B cell (primary cell): ENCODE measurements at regions of chr1 and their contacts with region 1.

Region 1: GRCh38 chr1:84944767-84945486 is 51.9 kb upstream of the LPAR3 start:
- DNase-seq: peak; percentile 95
- ATAC-seq: peak; percentile 93
- H3K4me3 ChIP-seq: peak overlapping the region; percentile 49 to 76 (median 60)
- H3K4me3 Mint-ChIP-seq: peak overlapping the region; percentile 80
- H3K27ac ChIP-seq: peak overlapping the region; percentile 78 to 83
- H3K27ac Mint-ChIP-seq: peak overlapping the region; percentile 87
- H3K4me1 ChIP-seq: peaks cover 0 to 13% of the 10 kb centered on the region in 2 donors
- H3K4me1 Mint-ChIP-seq: peaks cover 10% of the 10 kb centered on the region
- H3K27me3 ChIP-seq: no peaks in the 10 kb centered on the region
- H3K27me3 Mint-ChIP-seq: no peaks in the 10 kb centered on the region
- CTCF ChIP-seq: peak; percentile 99

Region 2: GRCh38 chr1:84690397-84691121 is 254.4 kb before region 1 on chr1 and contains the start of gene SSX2IP:
- CTCF ChIA-PET with region 1: interaction called, 4 read pairs
- POLR2A ChIA-PET with region 1: no interaction called
- intact Hi-C with region 1: loop called (anchors 2 kb)
- DNase-seq: peak; percentile 97
- ATAC-seq: peak; percentile 86
- H3K4me3 ChIP-seq: peak within 1 kb of the TSS; percentile 71 to 93 (median 85)
- H3K4me3 Mint-ChIP-seq: peak within 1 kb of the TSS; percentile 80
- H3K27ac ChIP-seq: peak within 1 kb of the TSS; percentile 56 to 64
- H3K27ac Mint-ChIP-seq: peak within 1 kb of the TSS; percentile 62
- H3K4me1 ChIP-seq: peaks cover 12 to 24% of the 10 kb centered on the region in 2 donors
- H3K4me1 Mint-ChIP-seq: peaks cover 27% of the 10 kb centered on the region
- H3K27me3 ChIP-seq: no peaks in the 10 kb centered on the region
- H3K27me3 Mint-ChIP-seq: no peaks in the 10 kb centered on the region
- CTCF ChIP-seq: no peak
- total RNA-seq, gene SSX2IP: 7.1 and 10.3 TPM in 2 replicates

Region 3: GRCh38 chr1:84973498-84974334 is 28.8 kb after region 1 on chr1:
- CTCF ChIA-PET with region 1: interaction called, 23 read pairs
- POLR2A ChIA-PET with region 1: no interaction called
- intact Hi-C with region 1: no loop called
- DNase-seq: no peak
- ATAC-seq: peak; percentile 24
- H3K4me3 ChIP-seq: no peak overlapping the region
- H3K4me3 Mint-ChIP-seq: peak overlapping the region; percentile 27
- H3K27ac ChIP-seq: no peak overlapping the region
- H3K27ac Mint-ChIP-seq: peak overlapping the region; percentile 43
- H3K4me1 ChIP-seq: peaks cover 22 to 37% of the 10 kb centered on the region in 2 donors
- H3K4me1 Mint-ChIP-seq: peaks cover 59% of the 10 kb centered on the region
- H3K27me3 ChIP-seq: no peaks in the 10 kb centered on the region
- H3K27me3 Mint-ChIP-seq: no peaks in the 10 kb centered on the region
- CTCF ChIP-seq: no peak

Region 4: GRCh38 chr1:85027242-85027983 is 82.5 kb after region 1 on chr1:
- CTCF ChIA-PET with region 1: interaction called, 458 read pairs
- POLR2A ChIA-PET with region 1: interaction called, 16 read pairs
- intact Hi-C with region 1: loop called (anchors 1 kb)
- DNase-seq: peak; percentile 70
- ATAC-seq: peak; percentile 94
- H3K4me3 ChIP-seq: peak overlapping the region in 3 of 5 experiments; percentile 16 to 40 (median 35)
- H3K4me3 Mint-ChIP-seq: peak overlapping the region; percentile 75
- H3K27ac ChIP-seq: peak overlapping the region in 1 of 2 donors; percentile 25
- H3K27ac Mint-ChIP-seq: peak overlapping the region; percentile 86
- H3K4me1 ChIP-seq: peaks cover 0 to 6% of the 10 kb centered on the region in 2 donors
- H3K4me1 Mint-ChIP-seq: peaks cover 6% of the 10 kb centered on the region
- H3K27me3 ChIP-seq: no peaks in the 10 kb centered on the region
- H3K27me3 Mint-ChIP-seq: no peaks in the 10 kb centered on the region
- CTCF ChIP-seq: peak; percentile 59

Region 5: DNA sequence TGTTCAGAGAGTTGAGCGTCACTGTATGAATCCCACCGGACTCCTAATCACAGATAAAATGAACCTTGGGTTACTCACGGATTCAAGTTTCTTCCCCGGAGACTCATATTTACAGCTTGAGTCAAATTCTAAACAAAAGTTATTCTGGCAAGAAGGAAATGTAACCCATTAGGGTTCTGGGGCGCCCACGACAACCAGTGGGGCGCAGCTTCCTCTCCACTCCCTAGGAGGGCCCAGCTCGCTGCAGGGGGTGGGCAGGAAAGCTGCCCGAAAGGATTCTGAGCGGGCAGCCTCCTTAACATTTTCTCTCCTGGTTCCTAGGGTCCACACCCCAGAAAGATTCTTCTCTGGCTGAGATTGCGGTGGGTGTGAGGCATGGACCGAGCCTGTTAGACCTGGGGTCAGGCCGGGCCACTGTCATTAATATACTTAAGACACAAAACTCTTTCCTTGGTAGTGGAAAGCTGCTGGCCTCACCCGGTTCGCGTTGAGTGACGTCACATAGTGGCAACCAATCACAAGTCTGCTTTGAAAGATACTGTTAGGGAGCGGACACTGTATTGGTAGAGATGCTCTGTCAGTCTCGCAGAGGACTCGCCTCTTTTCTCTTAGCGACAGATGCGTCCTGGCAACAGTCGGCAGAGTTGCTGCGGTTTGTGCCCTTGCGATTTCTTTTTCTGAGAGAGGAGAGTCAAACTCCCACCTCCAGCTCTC is 116.9 kb after region 1 on chr1:
- CTCF ChIA-PET with region 1: interaction called, 11 read pairs
- POLR2A ChIA-PET with region 1: no interaction called
- intact Hi-C with region 1: no loop called
- DNase-seq: peak; percentile 94
- ATAC-seq: peak; percentile 99
- H3K4me3 ChIP-seq: peak overlapping the region in 4 of 5 experiments; percentile 45 to 67 (median 55)
- H3K4me3 Mint-ChIP-seq: peak overlapping the region; percentile 92
- H3K27ac ChIP-seq: no peak overlapping the region
- H3K27ac Mint-ChIP-seq: peak overlapping the region; percentile 87
- H3K4me1 ChIP-seq: peaks cover 10 to 13% of the 10 kb centered on the region in 2 donors
- H3K4me1 Mint-ChIP-seq: peaks cover 18% of the 10 kb centered on the region
- H3K27me3 ChIP-seq: peaks cover 0 to 3% (median 0%) of the 10 kb centered on the region in 4 experiments
- H3K27me3 Mint-ChIP-seq: peaks cover 16% of the 10 kb centered on the region
- CTCF ChIP-seq: no peak

Region 6: DNA sequence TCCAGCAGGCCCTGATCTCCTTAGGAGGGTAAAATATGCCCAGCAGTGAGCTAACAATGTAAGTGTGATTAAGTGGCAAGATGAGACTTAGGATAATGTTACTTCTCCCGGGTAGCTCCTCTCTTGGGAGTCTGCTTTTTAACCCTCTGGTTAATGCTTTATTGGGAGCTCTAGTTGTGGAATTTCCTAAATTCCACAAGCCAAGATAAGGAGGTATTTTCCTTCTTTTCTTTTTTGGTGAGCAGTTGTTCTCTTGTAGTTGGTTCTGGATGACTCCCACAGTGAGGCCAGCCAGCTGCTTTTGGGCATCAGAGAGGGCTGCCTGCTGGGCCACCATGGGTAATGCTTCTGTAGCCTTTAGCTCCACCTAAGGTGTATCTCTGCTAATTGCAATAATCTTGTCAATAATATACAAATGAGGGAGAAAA is 295.3 kb after region 1 on chr1:
- CTCF ChIA-PET with region 1: interaction called, 10 read pairs
- POLR2A ChIA-PET with region 1: no interaction called
- intact Hi-C with region 1: no loop called
- DNase-seq: no peak
- ATAC-seq: no peak
- H3K4me3 ChIP-seq: no peak overlapping the region
- H3K4me3 Mint-ChIP-seq: no peak overlapping the region
- H3K27ac ChIP-seq: no peak overlapping the region
- H3K27ac Mint-ChIP-seq: no peak overlapping the region
- H3K4me1 ChIP-seq: no peaks in the 10 kb centered on the region
- H3K4me1 Mint-ChIP-seq: peaks cover 1% of the 10 kb centered on the region
- H3K27me3 ChIP-seq: peaks cover 0 to 7% (median 4%) of the 10 kb centered on the region in 4 experiments
- H3K27me3 Mint-ChIP-seq: peaks cover 15% of the 10 kb centered on the region
- CTCF ChIP-seq: no peak

Region 7: GRCh38 chr1:85707990-85708828 is 763.3 kb after region 1 on chr1 and contains the start of gene ZNHIT6:
- CTCF ChIA-PET with region 1: interaction called, 4 read pairs
- POLR2A ChIA-PET with region 1: no interaction called
- intact Hi-C with region 1: loop called (anchors 5 kb)
- DNase-seq: peak; percentile 92
- ATAC-seq: peak; percentile 95
- H3K4me3 ChIP-seq: peak within 1 kb of the TSS; percentile 76 to 99 (median 91)
- H3K4me3 Mint-ChIP-seq: no peak within 1 kb of the TSS
- H3K27ac ChIP-seq: peak within 1 kb of the TSS; percentile 73
- H3K27ac Mint-ChIP-seq: no peak within 1 kb of the TSS
- H3K4me1 ChIP-seq: peaks cover 16 to 22% of the 10 kb centered on the region in 2 donors
- H3K4me1 Mint-ChIP-seq: peaks cover 16% of the 10 kb centered on the region
- H3K27me3 ChIP-seq: peaks cover 0 to under 1% (median 0%) of the 10 kb centered on the region in 4 experiments
- H3K27me3 Mint-ChIP-seq: no peaks in the 10 kb centered on the region
- CTCF ChIP-seq: peak; percentile 27
- total RNA-seq, gene ZNHIT6: 16.3 and 17.3 TPM in 2 replicates